Calu3 (cell line): ENCODE measurements at regions of chr2 and their contacts with region 1.

Region 1: GRCh38 chr2:233026192-233026813 is 6.2 kb upstream of the NEU2 start:
- DNase-seq: no peak
- H3K4me3 Mint-ChIP-seq: no peak overlapping the region
- H3K27ac Mint-ChIP-seq: no peak overlapping the region
- H3K4me1 Mint-ChIP-seq: peaks cover 32% of the 10 kb centered on the region
- H3K27me3 Mint-ChIP-seq: no peaks in the 10 kb centered on the region
- CTCF ChIP-seq: no peak

Region 2: GRCh38 chr2:232600053-232600773 is 426.1 kb before region 1 on chr2:
- CTCF ChIA-PET with region 1: no interaction called
- intact Hi-C with region 1: loop called (anchors 10 kb)
- DNase-seq: no peak
- H3K4me3 Mint-ChIP-seq: no peak overlapping the region
- H3K27ac Mint-ChIP-seq: no peak overlapping the region
- H3K4me1 Mint-ChIP-seq: no peaks in the 10 kb centered on the region
- H3K27me3 Mint-ChIP-seq: peaks cover 20% of the 10 kb centered on the region
- CTCF ChIP-seq: no peak

Region 3: GRCh38 chr2:232854082-232854481 is 172.2 kb before region 1 on chr2:
- CTCF ChIA-PET with region 1: interaction called, 4 read pairs
- intact Hi-C with region 1: loop called (anchors 2 kb)
- DNase-seq: peak; percentile 63
- H3K4me3 Mint-ChIP-seq: no peak overlapping the region
- H3K27ac Mint-ChIP-seq: peak overlapping the region; percentile 60
- H3K4me1 Mint-ChIP-seq: peaks cover 37% of the 10 kb centered on the region
- H3K27me3 Mint-ChIP-seq: no peaks in the 10 kb centered on the region
- CTCF ChIP-seq: no peak

Region 4: GRCh38 chr2:232979871-232980461 is 46.3 kb before region 1 on chr2:
- CTCF ChIA-PET with region 1: interaction called, 12 read pairs
- intact Hi-C with region 1: loop called (anchors 5 kb)
- DNase-seq: peak; percentile 47
- H3K4me3 Mint-ChIP-seq: peak overlapping the region; percentile 5
- H3K27ac Mint-ChIP-seq: peak overlapping the region; percentile 43
- H3K4me1 Mint-ChIP-seq: peaks cover 31% of the 10 kb centered on the region
- H3K27me3 Mint-ChIP-seq: no peaks in the 10 kb centered on the region
- CTCF ChIP-seq: no peak